GM12878 (cell line): ENCODE measurements at regions of chr16 and their contacts with region 1.

Region 1: GRCh38 chr16:67017810-67018488 is 11.0 kb upstream of the CBFB start:
- DNase-seq: peak; percentile 82
- ATAC-seq: peak; percentile 96
- H3K4me3 ChIP-seq: no peak overlapping the region
- H3K27ac ChIP-seq: no peak overlapping the region
- H3K4me1 ChIP-seq: peaks cover 13% of the 10 kb centered on the region; the same call in 1 of the 2 replicates
- H3K27me3 ChIP-seq: peaks cover 0 to 2% of the 10 kb centered on the region in 2 experiments; a peak in 3 of 4 replicates
- CTCF ChIP-seq: peak; percentile 81 to 93 (median 93)
- EP300 ChIP-seq: no peak
- POLR2A ChIP-seq: no peak
- RAD21 ChIP-seq: peak; percentile 93

Region 2: DNA sequence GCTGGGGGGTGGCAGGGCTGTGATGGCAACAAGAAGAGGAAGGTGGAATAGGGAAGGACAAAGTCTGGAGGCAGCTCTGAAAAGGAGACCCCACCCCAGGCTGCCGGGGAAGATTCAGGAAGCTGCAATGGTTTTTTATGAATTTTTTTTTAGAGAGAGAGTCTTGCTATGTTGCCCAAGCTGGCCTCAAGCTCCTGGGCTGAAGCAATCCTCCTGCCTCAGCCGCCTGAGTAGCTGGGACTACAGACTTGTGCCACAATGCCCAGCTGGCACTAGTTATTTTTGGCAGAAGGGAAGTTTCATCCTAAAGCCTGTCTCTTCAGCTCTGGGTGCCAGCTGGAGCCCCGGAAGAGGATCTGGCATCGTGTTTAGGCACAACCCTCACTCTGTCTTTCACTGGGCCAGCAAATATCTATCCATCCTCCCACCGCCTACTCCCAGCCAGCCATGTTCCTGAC is 58.2 kb before region 1 on chr16:
- CTCF ChIA-PET with region 1: interaction called, 12 read pairs
- POLR2A ChIA-PET with region 1: interaction called, 3 read pairs
- RAD21 ChIA-PET with region 1: no interaction called
- SMC1A ChIA-PET with region 1: interaction called, 7 read pairs
- in situ Hi-C with region 1: no loop called
- intact Hi-C with region 1: loop called (anchors 10 kb)
- DNase-seq: no peak
- ATAC-seq: no peak
- H3K4me3 ChIP-seq: no peak overlapping the region
- H3K27ac ChIP-seq: no peak overlapping the region
- H3K4me1 ChIP-seq: peaks cover 11% of the 10 kb centered on the region
- H3K27me3 ChIP-seq: no peaks in the 10 kb centered on the region
- CTCF ChIP-seq: no peak
- EP300 ChIP-seq: no peak
- POLR2A ChIP-seq: no peak
- RAD21 ChIP-seq: no peak

Region 3: GRCh38 chr16:67028555-67029248 is 10.8 kb after region 1 on chr16 and contains the start of gene CBFB:
- CTCF ChIA-PET with region 1: interaction called, 54 read pairs
- POLR2A ChIA-PET with region 1: interaction called, 15 read pairs
- RAD21 ChIA-PET with region 1: interaction called, 16 read pairs
- SMC1A ChIA-PET with region 1: interaction called, 17 read pairs
- in situ Hi-C with region 1: no loop called
- intact Hi-C with region 1: no loop called
- DNase-seq: peak; percentile 75
- ATAC-seq: peak; percentile 89
- H3K4me3 ChIP-seq: peak within 1 kb of the TSS; percentile 72
- H3K27ac ChIP-seq: peak within 1 kb of the TSS; percentile 99
- H3K4me1 ChIP-seq: peaks cover 13% of the 10 kb centered on the region
- H3K27me3 ChIP-seq: no peaks in the 10 kb centered on the region
- CTCF ChIP-seq: no peak
- EP300 ChIP-seq: no peak
- POLR2A ChIP-seq: peak; percentile 98
- RAD21 ChIP-seq: no peak
- polyA plus RNA-seq, gene CBFB: 25.3 to 43.6 TPM

Region 4: DNA sequence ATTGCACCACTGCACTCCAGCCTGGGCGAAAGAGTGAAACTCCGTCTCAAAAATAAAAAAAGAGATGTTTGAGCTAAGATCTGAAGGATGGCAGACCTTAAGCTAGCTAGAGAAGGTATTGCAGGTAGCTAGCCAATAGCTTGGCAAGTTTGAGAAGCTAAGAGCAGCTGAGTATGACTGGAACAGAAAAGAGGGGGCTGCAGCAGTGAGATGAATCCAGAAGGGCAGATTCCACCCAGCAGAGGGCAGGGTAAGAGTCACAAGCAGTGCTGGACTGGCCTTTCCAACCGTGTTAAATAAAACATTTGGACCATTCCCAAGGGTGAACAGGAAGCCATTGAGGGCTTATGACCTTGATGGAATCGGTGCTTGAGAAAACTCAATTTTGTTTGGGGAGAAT is 86.1 kb after region 1 on chr16:
- CTCF ChIA-PET with region 1: interaction called, 205 read pairs
- POLR2A ChIA-PET with region 1: interaction called, 12 read pairs
- RAD21 ChIA-PET with region 1: interaction called, 85 read pairs
- SMC1A ChIA-PET with region 1: interaction called, 57 read pairs
- in situ Hi-C with region 1: loop called (anchors 5 kb)
- intact Hi-C with region 1: loop called (anchors 1 kb)
- DNase-seq: no peak
- ATAC-seq: peak; percentile 70
- H3K4me3 ChIP-seq: no peak overlapping the region
- H3K27ac ChIP-seq: no peak overlapping the region
- H3K4me1 ChIP-seq: peaks cover 9% of the 10 kb centered on the region
- H3K27me3 ChIP-seq: no peaks in the 10 kb centered on the region
- CTCF ChIP-seq: peak in 2 of 3 experiments; percentile 25 to 32; a peak in 2 of 6 replicates
- EP300 ChIP-seq: no peak
- POLR2A ChIP-seq: no peak
- RAD21 ChIP-seq: no peak

Region 5: GRCh38 chr16:67150833-67151396 is 133.0 kb after region 1 on chr16 and contains the start of gene B3GNT9:
- CTCF ChIA-PET with region 1: interaction called, 67 read pairs
- POLR2A ChIA-PET with region 1: interaction called, 3 read pairs
- RAD21 ChIA-PET with region 1: interaction called, 69 read pairs
- SMC1A ChIA-PET with region 1: interaction called, 18 read pairs
- in situ Hi-C with region 1: loop called (anchors 5 kb)
- intact Hi-C with region 1: loop called (anchors 1 kb)
- DNase-seq: no peak
- ATAC-seq: peak; percentile 59
- H3K4me3 ChIP-seq: peak within 1 kb of the TSS; percentile 74
- H3K27ac ChIP-seq: peak within 1 kb of the TSS; percentile 25; the same call in 1 of the 2 replicates
- H3K4me1 ChIP-seq: peaks cover 5% of the 10 kb centered on the region
- H3K27me3 ChIP-seq: no peaks in the 10 kb centered on the region
- CTCF ChIP-seq: no peak
- EP300 ChIP-seq: no peak
- POLR2A ChIP-seq: peak; percentile 72
- RAD21 ChIP-seq: no peak
- polyA plus RNA-seq, gene B3GNT9: 0.08 to 0.15 TPM

Region 6: GRCh38 chr16:67173808-67174705 is 156.1 kb after region 1 on chr16:
- CTCF ChIA-PET with region 1: interaction called, 31 read pairs
- POLR2A ChIA-PET with region 1: interaction called, 9 read pairs
- RAD21 ChIA-PET with region 1: interaction called, 13 read pairs
- SMC1A ChIA-PET with region 1: interaction called, 8 read pairs
- in situ Hi-C with region 1: no loop called
- intact Hi-C with region 1: no loop called
- DNase-seq: no peak
- ATAC-seq: peak; percentile 70
- H3K4me3 ChIP-seq: peak overlapping the region; percentile 55
- H3K27ac ChIP-seq: no peak overlapping the region
- H3K4me1 ChIP-seq: peaks cover 44% of the 10 kb centered on the region
- H3K27me3 ChIP-seq: no peaks in the 10 kb centered on the region
- CTCF ChIP-seq: peak in 1 of 3 experiments; percentile 30; a peak in 2 of 6 replicates
- EP300 ChIP-seq: no peak; a peak in 1 of 4 replicates
- POLR2A ChIP-seq: peak; percentile 50
- RAD21 ChIP-seq: no peak

Region 7: DNA sequence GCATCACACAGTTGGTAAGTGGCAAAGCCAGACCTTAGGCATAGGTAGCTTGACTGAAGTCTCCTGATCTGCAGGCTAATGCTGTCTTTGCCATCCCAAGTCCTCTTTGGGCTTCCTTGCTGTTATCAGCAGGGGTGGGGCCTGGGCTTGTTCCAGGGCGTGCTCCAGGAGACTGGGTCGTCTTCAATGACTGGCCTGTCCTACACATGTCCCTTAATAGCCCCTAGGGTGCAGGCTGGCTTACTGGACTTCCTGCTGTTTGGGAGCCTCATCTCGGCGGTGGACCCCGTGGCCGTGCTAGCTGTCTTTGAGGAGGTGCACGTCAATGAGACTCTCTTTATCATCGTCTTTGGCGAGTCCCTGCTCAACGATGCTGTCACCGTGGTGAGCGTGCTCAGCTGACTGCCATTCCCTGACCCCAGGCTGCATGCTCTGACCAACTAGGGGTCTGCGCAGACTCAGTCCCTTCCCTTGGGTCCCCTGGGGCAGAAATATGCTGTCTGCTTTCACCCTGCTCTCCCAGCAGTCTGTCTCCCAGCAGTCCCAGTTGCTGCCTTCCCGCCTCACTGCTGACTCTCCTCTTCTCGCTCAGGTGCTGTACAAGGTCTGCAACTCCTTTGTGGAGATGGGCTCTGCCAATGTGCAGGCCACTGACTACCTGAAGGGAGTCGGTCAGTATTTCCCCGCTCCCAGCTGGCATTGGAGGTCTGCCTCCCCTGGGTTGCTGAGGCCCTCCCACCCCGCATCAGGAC is 237.0 kb after region 1 on chr16:
- CTCF ChIA-PET with region 1: no interaction called
- POLR2A ChIA-PET with region 1: no interaction called
- RAD21 ChIA-PET with region 1: no interaction called
- SMC1A ChIA-PET with region 1: no interaction called
- in situ Hi-C with region 1: no loop called
- intact Hi-C with region 1: no loop called
- DNase-seq: no peak
- ATAC-seq: no peak
- H3K4me3 ChIP-seq: no peak overlapping the region
- H3K27ac ChIP-seq: no peak overlapping the region
- H3K4me1 ChIP-seq: no peaks in the 10 kb centered on the region
- H3K27me3 ChIP-seq: no peaks in the 10 kb centered on the region
- CTCF ChIP-seq: no peak
- EP300 ChIP-seq: no peak
- POLR2A ChIP-seq: no peak
- RAD21 ChIP-seq: no peak